ENCODE measurements at regions of chr4 and their contacts with region 1.

Region 1: DNA sequence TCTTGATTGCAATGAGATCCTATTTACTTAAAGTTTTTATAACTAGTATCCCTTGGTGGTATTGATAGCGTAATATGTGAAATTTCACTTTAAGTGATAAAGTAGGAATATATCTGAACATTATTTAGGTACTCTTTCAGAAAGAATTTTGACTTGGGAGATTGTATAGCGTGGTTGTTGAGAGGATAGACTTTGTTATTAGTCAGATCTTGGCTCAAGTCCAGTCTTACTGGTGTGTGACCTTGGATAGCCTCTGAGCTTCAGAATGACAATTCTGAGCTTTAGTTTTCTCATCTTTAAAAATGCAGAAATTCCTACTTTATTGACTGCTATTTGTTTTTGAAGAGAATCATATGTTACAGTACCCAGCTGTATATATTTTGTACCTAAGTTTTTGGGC is 32.6 kb downstream of the DCK start:
- DNase-seq: no peak
- CTCF ChIP-seq: no peak

Region 2: GRCh38 chr4:70903291-70903603 is 122.8 kb before region 1 on chr4:
- in situ Hi-C with region 1: no loop called
- DNase-seq: no peak
- CTCF ChIP-seq: no peak

Region 3: DNA sequence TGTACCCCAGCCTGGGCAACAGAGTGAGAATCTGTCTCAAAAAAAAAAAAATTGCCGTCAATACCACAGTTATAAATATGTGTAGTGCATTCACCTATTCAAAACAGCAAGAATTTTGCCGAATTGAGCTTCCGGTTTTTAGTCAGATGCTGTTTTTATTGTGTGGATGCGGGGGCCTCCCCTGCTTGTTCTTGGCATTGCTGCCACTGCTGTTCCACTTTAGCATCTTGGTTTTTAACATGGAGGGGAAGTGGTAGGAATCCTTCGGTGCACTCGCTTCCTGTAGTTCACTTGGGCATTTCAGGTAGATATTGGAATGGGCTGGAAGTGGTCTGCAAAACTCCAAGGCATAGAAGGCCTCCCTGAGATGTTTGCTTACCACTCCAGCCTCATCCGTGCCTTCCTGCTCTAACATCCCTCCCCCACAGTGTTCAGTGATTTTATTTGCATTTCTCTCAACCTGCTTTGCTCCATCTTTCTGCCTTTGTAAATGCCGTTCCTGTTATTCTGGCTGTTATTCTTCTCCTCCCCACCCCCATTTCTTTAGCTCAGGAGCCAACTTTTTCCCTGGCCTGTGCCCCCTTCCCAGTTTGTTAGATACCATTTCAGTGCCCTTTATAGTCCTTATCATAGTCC is 98.5 kb before region 1 on chr4:
- in situ Hi-C with region 1: loop called (anchors 25 kb)
- DNase-seq: no peak
- CTCF ChIP-seq: no peak

Measured in GM13976 (cell line).